ENCODE measurements at regions of chr14 and their contacts with region 1.

Region 1: GRCh38 chr14:73295198-73295796 is 58.0 kb downstream of the PAPLN start:
- DNase-seq: no peak

Region 2: GRCh38 chr14:73472185-73473114 is 177.2 kb after region 1 on chr14:
- intact Hi-C with region 1: loop called (anchors 1 kb)
- DNase-seq: no peak